GM10248 (cell line): ENCODE measurements at regions of chr1 and their contacts with region 1.

Region 1: DNA sequence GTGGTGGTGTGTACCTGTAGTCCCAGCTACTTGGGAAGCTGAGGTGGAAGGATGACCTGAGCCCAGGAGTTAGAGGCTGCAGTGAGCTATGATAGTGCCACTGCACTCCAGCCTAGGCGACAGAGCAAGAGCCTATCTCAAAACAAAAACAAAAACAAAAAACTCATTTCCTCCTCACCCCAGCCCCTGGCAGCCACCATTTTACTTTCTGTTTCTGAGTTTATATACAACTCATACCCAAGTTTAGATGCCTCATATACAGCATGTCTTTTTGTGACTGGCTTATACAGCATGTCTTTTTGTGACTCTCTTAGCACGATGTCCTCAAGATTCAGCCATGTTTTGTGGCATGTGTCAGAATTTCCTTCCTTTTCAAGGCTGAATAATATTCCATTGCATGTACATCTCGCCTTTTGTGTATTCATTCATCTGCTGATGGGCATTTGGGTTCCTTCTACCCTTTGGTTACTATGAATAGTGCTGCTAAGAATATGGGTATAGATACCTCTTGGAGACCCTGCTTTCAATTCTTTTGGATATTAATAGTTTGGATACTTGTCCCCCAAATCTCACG is 14.7 kb downstream of the COA7 start:
- DNase-seq: no peak
- CTCF ChIP-seq: no peak

Region 2: DNA sequence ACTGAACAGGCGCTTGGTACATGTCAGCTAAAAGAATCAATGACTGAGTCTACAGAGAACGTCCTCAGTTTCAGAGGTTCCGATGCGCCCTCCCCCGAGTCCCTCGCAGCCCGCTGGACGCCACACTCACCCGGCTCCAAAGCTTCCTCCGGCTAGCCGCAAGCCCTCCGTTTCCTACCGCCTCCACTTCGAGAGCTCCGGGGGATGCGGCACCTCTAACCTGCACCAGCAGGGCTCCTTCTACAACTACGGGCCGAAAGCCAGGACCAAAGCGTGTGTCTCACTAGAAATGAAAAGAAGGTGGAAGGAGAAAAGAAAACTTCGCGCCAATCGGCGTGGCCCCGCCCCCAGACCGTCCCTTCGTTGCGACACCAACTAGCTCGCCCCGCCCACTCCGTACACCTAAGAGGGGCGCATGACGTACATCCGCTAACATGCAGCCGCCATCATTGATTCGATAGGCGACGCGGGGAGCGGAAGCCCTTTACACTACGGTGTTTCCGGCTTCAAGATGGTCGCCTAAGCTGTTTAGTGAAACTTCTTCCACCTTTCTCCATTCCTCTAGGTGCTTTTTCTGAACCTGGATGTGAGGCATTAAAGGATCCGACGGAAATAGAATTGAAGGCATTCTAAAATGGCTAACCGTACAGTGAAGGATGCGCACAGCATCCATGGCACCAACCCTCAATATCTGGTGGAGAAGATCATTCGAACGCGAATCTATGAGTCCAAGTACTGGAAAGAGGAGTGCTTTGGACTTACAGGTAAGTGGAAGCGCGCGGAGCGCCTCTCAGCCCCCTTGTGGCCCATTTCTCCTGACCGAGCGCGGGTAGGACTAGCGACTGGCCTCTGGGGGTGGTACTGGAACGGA is 279.1 kb before region 1 on chr1 and contains the starts of genes ORC1 and PRPF38A:
- CTCF ChIA-PET with region 1: interaction called, 20 read pairs
- POLR2A ChIA-PET with region 1: no interaction called
- DNase-seq: peak; percentile 98
- CTCF ChIP-seq: peak; percentile 46

Region 3: DNA sequence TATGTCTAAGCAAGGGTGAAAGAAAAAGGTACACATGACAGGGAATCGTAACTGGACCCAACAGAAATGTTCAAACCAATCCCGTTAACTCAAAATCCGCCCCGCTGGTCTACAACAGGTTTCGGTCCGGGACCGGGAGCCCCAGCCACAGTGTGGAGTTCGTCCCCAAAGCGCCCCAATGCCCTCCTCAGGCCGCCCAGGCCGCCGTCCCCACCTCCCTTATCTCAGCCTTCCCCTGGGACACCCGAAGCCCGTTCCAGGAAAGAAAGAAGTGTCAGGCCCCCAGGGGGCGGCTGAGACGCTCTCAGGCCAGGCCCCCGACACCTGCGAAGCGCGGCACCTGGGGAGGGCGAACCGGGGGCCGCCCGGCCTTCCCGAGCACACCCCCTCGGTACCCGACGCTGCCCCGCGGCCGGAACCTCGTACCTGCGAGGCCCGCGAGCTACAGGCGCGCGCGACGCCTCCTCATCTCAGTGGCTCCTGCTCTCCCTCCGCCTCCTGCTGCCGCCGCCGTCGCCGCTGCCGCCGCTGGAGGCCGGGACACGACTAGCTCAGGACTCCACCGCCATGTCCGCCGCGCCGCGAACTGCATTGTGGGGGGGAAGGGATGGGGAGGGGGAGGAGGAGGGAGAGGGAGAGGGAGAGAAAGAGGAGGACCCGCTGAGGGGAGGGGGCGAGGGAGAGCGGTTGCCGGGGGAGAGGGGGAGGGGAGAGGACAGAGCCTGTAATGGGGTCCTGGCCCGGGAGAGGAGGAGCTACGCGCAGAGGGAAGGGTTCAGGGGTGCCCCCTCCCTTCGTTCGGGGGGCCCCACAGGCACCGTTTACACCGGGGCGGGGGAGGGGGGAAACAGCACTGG is 130.7 kb before region 1 on chr1 and contains the start of gene TUT4:
- CTCF ChIA-PET with region 1: interaction called, 14 read pairs
- POLR2A ChIA-PET with region 1: no interaction called
- DNase-seq: peak; percentile 72
- CTCF ChIP-seq: peak; percentile 19

Region 4: GRCh38 chr1:52613636-52614373 is 69.6 kb before region 1 on chr1:
- CTCF ChIA-PET with region 1: no interaction called
- POLR2A ChIA-PET with region 1: no interaction called
- DNase-seq: no peak
- CTCF ChIP-seq: no peak

Region 5: GRCh38 chr1:52665006-52665941 is 18.2 kb before region 1 on chr1:
- CTCF ChIA-PET with region 1: interaction called, 13 read pairs
- POLR2A ChIA-PET with region 1: interaction called, 11 read pairs
- DNase-seq: no peak
- CTCF ChIP-seq: no peak